GM12878 (cell line): ENCODE measurements at regions of chr15 and their contacts with region 1.

Region 1: GRCh38 chr15:28975766-28976179 is 90.0 kb downstream of the APBA2 start:
- DNase-seq: no peak
- ATAC-seq: peak; percentile 75
- H3K4me3 ChIP-seq: no peak overlapping the region
- H3K27ac ChIP-seq: no peak overlapping the region
- H3K4me1 ChIP-seq: no peaks in the 10 kb centered on the region
- H3K27me3 ChIP-seq: peaks cover 1 to 4% of the 10 kb centered on the region in 2 experiments
- CTCF ChIP-seq: peak; percentile 77 to 84 (median 84)
- EP300 ChIP-seq: no peak
- POLR2A ChIP-seq: no peak
- RAD21 ChIP-seq: peak; percentile 69

Region 2: DNA sequence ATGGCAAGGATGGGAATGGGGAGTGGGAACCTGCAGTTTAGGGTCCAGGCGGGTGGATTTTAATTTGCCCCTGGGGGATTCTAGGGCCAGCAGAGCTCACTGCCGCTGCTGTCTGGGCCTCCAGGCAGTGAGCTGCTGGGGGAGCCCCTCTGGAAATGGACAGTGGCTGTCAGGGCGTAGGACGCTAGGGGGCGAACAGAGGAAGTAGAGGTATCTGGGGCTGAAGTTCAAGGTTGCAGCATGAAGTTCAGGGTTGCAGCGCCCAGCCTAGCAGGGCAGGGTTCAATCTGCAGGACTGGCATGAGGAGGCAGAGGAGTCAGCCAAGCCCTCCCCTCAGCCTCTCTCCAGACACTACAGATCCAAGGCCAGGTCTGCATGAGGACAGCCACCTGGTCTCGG is 40.4 kb before region 1 on chr15:
- CTCF ChIA-PET with region 1: no interaction called
- POLR2A ChIA-PET with region 1: no interaction called
- RAD21 ChIA-PET with region 1: no interaction called
- SMC1A ChIA-PET with region 1: no interaction called
- in situ Hi-C with region 1: no loop called
- intact Hi-C with region 1: loop called (anchors 2 kb)
- DNase-seq: no peak
- ATAC-seq: peak; percentile 88
- H3K4me3 ChIP-seq: no peak overlapping the region
- H3K27ac ChIP-seq: no peak overlapping the region
- H3K4me1 ChIP-seq: no peaks in the 10 kb centered on the region
- H3K27me3 ChIP-seq: peaks cover 0 to 2% of the 10 kb centered on the region in 2 experiments; a peak in 1 of 4 replicates
- CTCF ChIP-seq: peak; percentile 39 to 47 (median 43); a peak in 5 of 6 replicates
- EP300 ChIP-seq: no peak
- POLR2A ChIP-seq: no peak
- RAD21 ChIP-seq: no peak

Region 3: DNA sequence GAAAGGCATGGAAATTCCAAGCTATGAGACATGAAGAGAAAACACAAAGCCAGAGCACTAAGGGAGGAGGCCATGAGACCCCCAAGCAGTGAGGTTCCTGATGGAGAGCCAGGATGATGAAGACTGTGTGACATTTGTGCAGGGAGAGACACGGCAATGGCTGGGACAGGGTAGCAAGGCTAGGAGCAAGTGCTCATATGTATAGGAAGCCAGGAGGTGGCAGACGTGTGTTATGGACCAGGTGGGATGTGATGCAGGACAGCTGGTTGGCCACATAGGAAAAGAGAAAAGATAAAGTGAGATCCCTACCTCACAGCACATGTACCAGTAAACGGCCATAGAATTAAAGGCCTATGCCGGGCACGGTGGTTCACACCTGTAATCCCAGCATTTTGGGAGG is 22.7 kb after region 1 on chr15:
- CTCF ChIA-PET with region 1: no interaction called
- POLR2A ChIA-PET with region 1: no interaction called
- RAD21 ChIA-PET with region 1: no interaction called
- SMC1A ChIA-PET with region 1: no interaction called
- in situ Hi-C with region 1: no loop called
- intact Hi-C with region 1: no loop called
- DNase-seq: no peak
- ATAC-seq: no peak
- H3K4me3 ChIP-seq: no peak overlapping the region
- H3K27ac ChIP-seq: no peak overlapping the region
- H3K4me1 ChIP-seq: no peaks in the 10 kb centered on the region
- H3K27me3 ChIP-seq: no peaks in the 10 kb centered on the region; a peak in 2 of 4 replicates
- CTCF ChIP-seq: peak in 1 of 3 experiments; percentile 22; a peak in 2 of 6 replicates
- EP300 ChIP-seq: no peak
- POLR2A ChIP-seq: no peak
- RAD21 ChIP-seq: no peak